ENCODE measurements at regions of chr10 and their contacts with region 1.

Region 1: GRCh38 chr10:88165849-88166271 is 302.4 kb downstream of the PTEN start:
- DNase-seq: no peak
- ATAC-seq: peak; percentile 62
- H3K4me3 ChIP-seq: no peak overlapping the region
- H3K27ac ChIP-seq: peak overlapping the region; percentile 56 to 93
- H3K4me1 ChIP-seq: peaks cover 6% of the 10 kb centered on the region in 2 donors
- H3K27me3 ChIP-seq: no peaks in the 10 kb centered on the region

Region 2: GRCh38 chr10:87961046-87961713 is 204.7 kb before region 1 on chr10:
- intact Hi-C with region 1: loop called in 1 of 2 experiments (anchors 10 kb)
- DNase-seq: no peak
- ATAC-seq: peak; percentile 82
- H3K4me3 ChIP-seq: no peak overlapping the region
- H3K27ac ChIP-seq: no peak overlapping the region
- H3K4me1 ChIP-seq: peaks cover 0 to 2% of the 10 kb centered on the region in 2 donors
- H3K27me3 ChIP-seq: no peaks in the 10 kb centered on the region

Region 3: GRCh38 chr10:88216976-88217375 is 51.1 kb after region 1 on chr10:
- intact Hi-C with region 1: no loop called
- DNase-seq: no peak
- ATAC-seq: no peak
- H3K4me3 ChIP-seq: no peak overlapping the region
- H3K27ac ChIP-seq: no peak overlapping the region
- H3K4me1 ChIP-seq: no peaks in the 10 kb centered on the region
- H3K27me3 ChIP-seq: no peaks in the 10 kb centered on the region

Region 4: DNA sequence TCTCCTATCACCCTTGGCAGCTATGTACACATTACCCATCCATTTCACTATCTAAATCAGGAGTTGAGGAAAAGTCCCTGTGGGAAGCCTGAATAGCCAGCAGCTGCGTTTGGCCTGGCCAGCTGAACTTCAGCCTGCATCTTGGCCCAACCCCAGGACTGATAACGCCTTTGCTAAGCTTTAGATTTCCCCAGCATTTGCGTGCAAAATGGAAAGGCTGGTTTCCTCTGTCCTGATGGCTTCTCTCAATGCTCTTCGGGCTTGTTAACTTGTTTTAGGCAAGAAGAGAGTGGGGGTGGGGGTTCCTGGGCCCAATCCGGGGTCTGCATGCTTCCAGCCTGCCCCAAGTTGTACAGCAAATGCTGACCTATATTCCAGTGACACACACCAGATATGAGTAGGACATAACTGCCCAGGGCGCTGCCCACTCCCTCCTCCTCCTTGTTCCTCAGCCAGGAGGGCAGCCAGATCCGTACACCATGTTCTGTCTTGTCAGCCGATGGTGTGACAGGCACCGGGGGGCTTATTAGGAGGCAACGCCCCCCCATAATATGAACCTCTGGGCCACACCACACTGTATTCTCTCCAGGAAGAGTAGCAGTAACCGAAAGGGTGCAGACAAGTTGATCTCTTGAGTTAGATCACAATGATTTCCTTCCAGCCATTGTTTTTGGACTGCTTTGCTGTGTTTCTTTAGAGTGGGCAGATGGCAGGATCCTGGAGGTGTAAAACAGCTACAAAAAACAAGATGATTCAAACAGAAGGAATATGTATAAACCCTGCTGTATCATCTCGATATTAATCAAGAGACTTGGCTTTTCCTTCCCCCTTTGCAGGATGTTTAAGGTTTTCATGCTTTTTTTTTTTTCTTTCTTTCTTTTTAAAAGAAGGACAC is 78.2 kb after region 1 on chr10:
- intact Hi-C with region 1: loop called in 1 of 2 experiments (anchors 5 kb)
- DNase-seq: peak; percentile 75 to 78
- ATAC-seq: peak; percentile 74
- H3K4me3 ChIP-seq: no peak overlapping the region
- H3K27ac ChIP-seq: peak overlapping the region in 1 of 2 donors; percentile 33
- H3K4me1 ChIP-seq: peaks cover 0 to 11% of the 10 kb centered on the region in 2 donors
- H3K27me3 ChIP-seq: no peaks in the 10 kb centered on the region

Region 5: GRCh38 chr10:88553116-88553752 is 387.4 kb after region 1 on chr10:
- intact Hi-C with region 1: loop called in 1 of 2 experiments (anchors 10 kb)
- DNase-seq: no peak
- ATAC-seq: peak; percentile 87
- H3K4me3 ChIP-seq: no peak overlapping the region
- H3K27ac ChIP-seq: no peak overlapping the region
- H3K4me1 ChIP-seq: peaks cover 0 to 2% of the 10 kb centered on the region in 2 donors
- H3K27me3 ChIP-seq: no peaks in the 10 kb centered on the region

Measured in aorta (tissue), 5 donors.